Common myeloid progenitor, CD34-positive (primary cell): ENCODE measurements at regions of chr3 and their contacts with region 1.

Region 1: GRCh38 chr3:122679085-122679881 is 1.4 kb upstream of the PARP14 start:
- DNase-seq: peak; percentile 86 to 91 (median 89)
- H3K4me3 ChIP-seq: peak overlapping the region in 6 of 7 experiments; percentile 4 to 98 (median 86)
- H3K27ac ChIP-seq: peak overlapping the region; percentile 77 to 91
- H3K4me1 ChIP-seq: peaks cover 10 to 38% (median 32%) of the 10 kb centered on the region in 4 experiments
- H3K27me3 ChIP-seq: no peaks in the 10 kb centered on the region

Region 2: DNA sequence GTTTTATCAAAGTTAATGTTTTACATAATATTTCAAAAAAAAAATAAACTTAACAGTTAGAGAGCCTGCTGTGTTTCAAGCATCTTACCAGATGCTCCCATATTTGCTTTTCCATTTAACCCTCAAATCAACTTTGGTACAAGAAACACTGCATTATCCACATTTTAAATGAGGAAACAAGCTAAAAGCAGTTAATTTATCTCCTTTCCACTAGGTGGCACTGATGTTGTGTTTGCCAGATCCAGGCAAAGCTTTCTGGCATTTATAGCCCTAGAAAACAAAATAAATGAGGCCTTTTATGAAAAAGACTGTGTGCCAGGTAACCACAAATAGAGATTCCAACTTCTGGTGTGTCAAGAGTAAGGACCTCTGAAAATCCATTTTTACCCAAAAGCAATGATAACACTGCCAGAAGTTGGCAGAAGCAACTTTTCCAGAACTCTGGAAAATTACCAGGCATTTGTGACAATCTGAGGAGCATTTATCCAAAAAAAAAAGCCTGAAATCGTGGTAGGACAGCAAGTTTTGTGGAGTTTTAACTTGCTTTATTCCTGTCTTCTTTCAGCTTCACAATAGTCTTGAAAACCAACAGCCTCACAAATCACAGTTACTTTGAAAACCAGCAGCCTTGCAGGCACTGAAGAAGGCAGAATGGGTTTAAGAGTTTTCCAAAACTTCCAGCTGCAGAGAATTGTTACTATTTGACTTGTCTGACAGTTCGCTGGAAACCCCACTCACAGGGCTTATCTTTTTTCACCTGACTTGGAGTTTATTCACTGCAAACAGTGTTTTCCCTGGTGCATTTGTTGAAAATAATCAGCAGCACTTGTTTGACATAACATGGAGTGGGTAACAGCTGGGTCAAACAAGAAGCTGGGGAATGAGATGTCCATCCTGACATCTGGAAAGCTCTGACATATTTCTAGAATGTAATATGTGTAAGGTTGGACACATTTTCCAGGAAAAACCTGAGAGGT is 286.1 kb before region 1 on chr3:
- CTCF ChIA-PET with region 1: interaction called, 16 read pairs
- POLR2A ChIA-PET with region 1: no interaction called
- DNase-seq: peak; percentile 61 to 79 (median 79)
- H3K4me3 ChIP-seq: no peak overlapping the region
- H3K27ac ChIP-seq: no peak overlapping the region
- H3K4me1 ChIP-seq: peaks cover 0 to 10% (median 2%) of the 10 kb centered on the region in 4 experiments
- H3K27me3 ChIP-seq: no peaks in the 10 kb centered on the region

Region 3: DNA sequence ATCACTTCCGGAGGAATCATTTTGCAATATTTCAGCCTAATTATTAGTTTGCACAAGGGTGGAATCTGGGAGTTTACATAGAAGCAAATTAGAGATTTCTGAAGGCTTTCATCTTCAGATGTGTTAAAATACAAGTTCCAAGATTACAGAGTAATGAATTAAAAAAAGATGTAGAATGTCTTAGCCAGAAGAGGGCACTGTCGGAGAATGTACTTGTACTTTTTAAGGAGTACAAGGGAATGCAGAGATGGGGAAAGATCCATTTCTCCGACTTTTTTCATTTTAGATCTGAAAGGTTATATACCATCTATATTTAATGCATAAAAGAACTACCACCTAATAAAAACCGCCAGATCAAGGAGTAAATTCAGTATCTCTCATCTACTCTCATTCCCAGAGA is 220.3 kb before region 1 on chr3:
- CTCF ChIA-PET with region 1: interaction called, 20 read pairs
- POLR2A ChIA-PET with region 1: no interaction called
- DNase-seq: peak; percentile 56 to 72 (median 67)
- H3K4me3 ChIP-seq: no peak overlapping the region
- H3K27ac ChIP-seq: no peak overlapping the region
- H3K4me1 ChIP-seq: peaks cover 10 to 26% (median 13%) of the 10 kb centered on the region in 4 experiments
- H3K27me3 ChIP-seq: no peaks in the 10 kb centered on the region

Region 4: GRCh38 chr3:122555275-122556071 is 123.8 kb before region 1 on chr3:
- CTCF ChIA-PET with region 1: interaction called, 124 read pairs
- POLR2A ChIA-PET with region 1: no interaction called
- DNase-seq: no peak
- H3K4me3 ChIP-seq: no peak overlapping the region
- H3K27ac ChIP-seq: no peak overlapping the region
- H3K4me1 ChIP-seq: peaks cover 0 to under 1% (median 0%) of the 10 kb centered on the region in 4 experiments
- H3K27me3 ChIP-seq: no peaks in the 10 kb centered on the region

Region 5: DNA sequence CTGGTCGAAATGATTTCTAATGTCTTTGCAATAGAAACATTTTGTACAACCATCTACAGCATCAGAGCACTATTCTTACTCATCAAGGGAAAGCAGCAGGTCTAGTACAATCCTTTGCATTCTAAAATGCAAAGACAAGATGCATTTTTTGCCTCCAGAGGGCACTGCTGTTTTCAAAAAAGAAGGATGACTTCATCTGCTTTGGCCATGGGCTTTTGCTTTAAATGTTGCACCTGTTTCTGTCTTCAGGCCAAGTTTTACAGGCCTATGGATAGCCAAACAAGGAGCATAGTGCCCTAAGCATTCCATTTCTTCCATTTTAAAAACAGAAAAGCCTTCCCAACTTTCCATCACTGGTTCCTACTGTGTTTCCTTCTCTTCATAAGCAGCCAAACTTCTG is 118.6 kb before region 1 on chr3:
- CTCF ChIA-PET with region 1: interaction called, 124 read pairs
- POLR2A ChIA-PET with region 1: interaction called, 5 read pairs
- DNase-seq: peak; percentile 72 to 86 (median 85)
- H3K4me3 ChIP-seq: no peak overlapping the region
- H3K27ac ChIP-seq: no peak overlapping the region
- H3K4me1 ChIP-seq: peaks cover 10 to 26% (median 21%) of the 10 kb centered on the region in 4 experiments
- H3K27me3 ChIP-seq: no peaks in the 10 kb centered on the region

Region 6: GRCh38 chr3:122635789-122636188 is 43.5 kb before region 1 on chr3:
- CTCF ChIA-PET with region 1: no interaction called
- POLR2A ChIA-PET with region 1: no interaction called
- DNase-seq: no peak
- H3K4me3 ChIP-seq: no peak overlapping the region
- H3K27ac ChIP-seq: no peak overlapping the region
- H3K4me1 ChIP-seq: no peaks in the 10 kb centered on the region
- H3K27me3 ChIP-seq: no peaks in the 10 kb centered on the region

Region 7: DNA sequence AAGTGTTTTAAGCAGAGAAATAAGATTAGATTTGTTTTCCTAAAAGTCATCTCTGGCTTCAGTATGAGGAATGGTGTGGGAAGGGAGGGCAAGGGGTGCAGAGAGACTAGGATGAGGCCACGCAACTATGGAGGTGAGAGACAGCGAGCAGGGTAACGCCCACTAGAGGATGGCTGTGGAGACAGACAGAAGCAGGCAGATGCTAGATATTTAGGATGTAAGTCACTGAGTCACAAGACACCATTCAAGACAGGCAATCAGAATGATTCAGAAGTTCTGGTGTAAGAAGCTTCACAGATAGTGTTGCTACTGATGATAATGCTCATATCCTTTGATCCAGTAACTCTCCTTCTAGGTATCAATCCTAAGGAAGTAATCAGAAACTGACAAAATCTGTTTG is 95.3 kb after region 1 on chr3:
- CTCF ChIA-PET with region 1: no interaction called
- POLR2A ChIA-PET with region 1: no interaction called
- DNase-seq: no peak
- H3K4me3 ChIP-seq: no peak overlapping the region
- H3K27ac ChIP-seq: no peak overlapping the region
- H3K4me1 ChIP-seq: peaks cover 0 to 2% (median under 1%) of the 10 kb centered on the region in 4 experiments
- H3K27me3 ChIP-seq: no peaks in the 10 kb centered on the region

Region 8: DNA sequence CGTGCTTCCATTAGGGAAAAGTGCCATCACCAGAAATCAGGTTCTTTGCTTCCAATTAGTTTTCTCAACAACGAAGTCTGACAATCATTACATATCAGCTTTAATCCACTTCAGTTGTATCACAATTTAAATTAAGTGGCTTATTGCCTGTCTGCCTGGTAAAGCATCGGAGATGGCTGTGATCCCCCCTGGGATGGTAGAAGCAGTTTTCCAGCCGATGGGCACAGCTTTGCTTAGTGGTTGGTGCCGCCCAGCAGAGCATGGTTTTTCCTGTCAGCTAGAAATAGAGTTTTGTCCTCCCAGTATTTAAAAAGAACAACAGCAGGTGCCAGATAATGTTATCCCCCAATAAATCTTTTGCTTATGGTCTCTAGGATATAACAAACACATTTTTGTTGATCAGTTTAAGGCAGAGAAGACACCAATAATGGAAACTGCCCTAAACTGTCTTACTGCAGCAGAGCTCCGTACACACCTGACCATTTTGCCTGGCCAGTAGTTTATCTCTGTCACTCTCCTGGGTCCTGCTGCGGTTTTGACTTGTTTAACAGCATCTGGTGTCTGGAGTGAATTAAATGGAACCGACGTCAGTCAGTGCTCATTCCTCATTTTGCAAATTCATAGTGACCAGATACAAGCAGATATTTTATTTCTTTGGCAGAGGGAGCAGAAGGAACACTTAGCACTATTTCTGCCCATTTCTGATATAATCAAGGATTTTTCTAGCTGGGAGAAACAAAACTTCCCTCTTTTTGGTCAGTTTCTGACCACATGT is 194.6 kb after region 1 on chr3:
- CTCF ChIA-PET with region 1: no interaction called
- POLR2A ChIA-PET with region 1: no interaction called
- DNase-seq: no peak
- H3K4me3 ChIP-seq: no peak overlapping the region
- H3K27ac ChIP-seq: no peak overlapping the region
- H3K4me1 ChIP-seq: peaks cover 0 to 3% (median 1%) of the 10 kb centered on the region in 4 experiments
- H3K27me3 ChIP-seq: no peaks in the 10 kb centered on the region